ENCODE measurements at regions of chr2 and their contacts with region 1.

Region 1: GRCh38 chr2:74715078-74715791 is 61.2 kb downstream of the SEMA4F start:
- DNase-seq: peak; percentile 80 to 86
- ATAC-seq: peak; percentile 75 to 87 (median 84)
- H3K4me3 ChIP-seq: peak overlapping the region; percentile 81
- H3K27ac ChIP-seq: peak overlapping the region; percentile 71
- H3K4me1 ChIP-seq: peaks cover 18% of the 10 kb centered on the region
- H3K27me3 ChIP-seq: peaks cover 0 to 4% (median 0%) of the 10 kb centered on the region in 3 donors
- CTCF ChIP-seq: peak; percentile 93

Region 2: GRCh38 chr2:74833418-74834233 is 118.4 kb after region 1 on chr2 and contains the start of gene HK2:
- intact Hi-C with region 1: loop called (anchors 2 to 5 kb)
- DNase-seq: peak; percentile 86 to 93
- ATAC-seq: peak; percentile 90 to 92 (median 91)
- H3K4me3 ChIP-seq: peak within 1 kb of the TSS; percentile 75
- H3K27ac ChIP-seq: peak within 1 kb of the TSS; percentile 81
- H3K4me1 ChIP-seq: peaks cover 19% of the 10 kb centered on the region
- H3K27me3 ChIP-seq: no peaks in the 10 kb centered on the region
- CTCF ChIP-seq: no peak
- total RNA-seq, gene HK2: 47.9 to 150 (median 90.9) TPM